PC-3 (cell line): ENCODE measurements at regions of chr17 and their contacts with region 1.

Region 1: DNA sequence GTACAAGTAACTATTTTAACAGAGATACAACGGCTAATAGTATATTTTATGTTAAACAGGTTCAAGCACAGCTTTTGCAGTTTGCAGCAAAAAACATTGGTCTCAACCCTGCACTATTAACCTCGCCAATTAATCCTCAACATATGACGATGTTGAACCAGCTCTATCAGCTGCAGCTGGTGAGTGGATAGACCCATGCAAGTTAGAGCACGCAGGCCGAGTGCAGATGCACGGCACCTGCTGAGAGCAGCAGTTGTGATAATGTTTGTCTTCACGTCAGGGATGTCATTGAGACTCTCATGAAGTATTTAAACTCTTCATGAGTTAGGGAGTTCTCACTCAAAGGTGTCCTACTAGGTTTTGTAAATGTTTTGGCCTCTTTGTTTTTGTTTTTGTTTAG is 45.6 kb downstream of the TMC6 start:
- DNase-seq: no peak
- ATAC-seq: no peak
- H3K4me3 ChIP-seq: no peak overlapping the region
- H3K27ac ChIP-seq: no peak overlapping the region
- H3K4me1 ChIP-seq: no peaks in the 10 kb centered on the region
- H3K27me3 ChIP-seq: no peaks in the 10 kb centered on the region
- CTCF ChIP-seq: no peak

Region 2: GRCh38 chr17:77914385-77915254 is 168.4 kb before region 1 on chr17:
- CTCF ChIA-PET with region 1: no interaction called
- POLR2A ChIA-PET with region 1: no interaction called
- intact Hi-C with region 1: no loop called
- DNase-seq: no peak
- ATAC-seq: peak; percentile 78
- H3K4me3 ChIP-seq: no peak overlapping the region
- H3K27ac ChIP-seq: no peak overlapping the region
- H3K4me1 ChIP-seq: no peaks in the 10 kb centered on the region
- H3K27me3 ChIP-seq: peaks cover 60% of the 10 kb centered on the region
- CTCF ChIP-seq: peak; percentile 50

Region 3: GRCh38 chr17:78133971-78134898 is 51.2 kb after region 1 on chr17:
- CTCF ChIA-PET with region 1: no interaction called
- POLR2A ChIA-PET with region 1: no interaction called
- intact Hi-C with region 1: loop called (anchors 1 kb)
- DNase-seq: peak; percentile 73
- ATAC-seq: peak; percentile 62
- H3K4me3 ChIP-seq: no peak overlapping the region
- H3K27ac ChIP-seq: no peak overlapping the region
- H3K4me1 ChIP-seq: peaks cover 12% of the 10 kb centered on the region
- H3K27me3 ChIP-seq: no peaks in the 10 kb centered on the region
- CTCF ChIP-seq: peak; percentile 85

Region 4: GRCh38 chr17:78258323-78259191 is 175.6 kb after region 1 on chr17:
- CTCF ChIA-PET with region 1: no interaction called
- POLR2A ChIA-PET with region 1: no interaction called
- intact Hi-C with region 1: no loop called
- DNase-seq: no peak
- ATAC-seq: no peak
- H3K4me3 ChIP-seq: no peak overlapping the region
- H3K27ac ChIP-seq: no peak overlapping the region
- H3K4me1 ChIP-seq: no peaks in the 10 kb centered on the region
- H3K27me3 ChIP-seq: no peaks in the 10 kb centered on the region
- CTCF ChIP-seq: no peak